ENCODE measurements at regions of chr3 and their contacts with region 1.

Region 1: GRCh38 chr3:48273594-48274211 is 32.8 kb downstream of the ZNF589 start:
- DNase-seq: peak; percentile 31
- ATAC-seq: peak; percentile 67
- H3K4me3 Mint-ChIP-seq: no peak overlapping the region
- H3K27ac Mint-ChIP-seq: no peak overlapping the region
- H3K4me1 Mint-ChIP-seq: no peaks in the 10 kb centered on the region
- H3K27me3 Mint-ChIP-seq: no peaks in the 10 kb centered on the region
- CTCF ChIP-seq: no peak

Region 2: DNA sequence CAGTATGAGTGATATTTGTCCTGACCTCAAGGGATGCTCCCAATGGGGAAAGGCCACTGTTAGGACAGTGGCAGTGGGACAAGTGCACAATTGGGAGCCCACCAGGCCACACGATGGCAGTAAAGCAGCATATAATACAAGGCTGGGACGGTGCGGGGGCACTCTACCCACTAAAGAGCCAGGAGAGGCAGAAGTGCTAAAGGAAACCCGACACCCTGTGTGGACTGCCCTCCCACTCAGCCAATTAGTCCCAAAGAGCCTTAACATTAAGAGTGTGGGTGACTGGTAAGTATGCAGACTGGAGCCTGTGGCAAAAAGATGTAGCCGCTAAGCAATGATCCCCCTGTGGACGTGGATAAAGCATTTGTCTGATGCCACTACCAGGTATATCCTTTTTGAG is 41.0 kb before region 1 on chr3:
- CTCF ChIA-PET with region 1: no interaction called
- POLR2A ChIA-PET with region 1: no interaction called
- intact Hi-C with region 1: loop called (anchors 1 kb)
- DNase-seq: peak; percentile 34
- ATAC-seq: peak; percentile 98
- H3K4me3 Mint-ChIP-seq: peak overlapping the region; percentile 32
- H3K27ac Mint-ChIP-seq: peak overlapping the region; percentile 19
- H3K4me1 Mint-ChIP-seq: peaks cover 27% of the 10 kb centered on the region
- H3K27me3 Mint-ChIP-seq: no peaks in the 10 kb centered on the region
- CTCF ChIP-seq: no peak

Region 3: DNA sequence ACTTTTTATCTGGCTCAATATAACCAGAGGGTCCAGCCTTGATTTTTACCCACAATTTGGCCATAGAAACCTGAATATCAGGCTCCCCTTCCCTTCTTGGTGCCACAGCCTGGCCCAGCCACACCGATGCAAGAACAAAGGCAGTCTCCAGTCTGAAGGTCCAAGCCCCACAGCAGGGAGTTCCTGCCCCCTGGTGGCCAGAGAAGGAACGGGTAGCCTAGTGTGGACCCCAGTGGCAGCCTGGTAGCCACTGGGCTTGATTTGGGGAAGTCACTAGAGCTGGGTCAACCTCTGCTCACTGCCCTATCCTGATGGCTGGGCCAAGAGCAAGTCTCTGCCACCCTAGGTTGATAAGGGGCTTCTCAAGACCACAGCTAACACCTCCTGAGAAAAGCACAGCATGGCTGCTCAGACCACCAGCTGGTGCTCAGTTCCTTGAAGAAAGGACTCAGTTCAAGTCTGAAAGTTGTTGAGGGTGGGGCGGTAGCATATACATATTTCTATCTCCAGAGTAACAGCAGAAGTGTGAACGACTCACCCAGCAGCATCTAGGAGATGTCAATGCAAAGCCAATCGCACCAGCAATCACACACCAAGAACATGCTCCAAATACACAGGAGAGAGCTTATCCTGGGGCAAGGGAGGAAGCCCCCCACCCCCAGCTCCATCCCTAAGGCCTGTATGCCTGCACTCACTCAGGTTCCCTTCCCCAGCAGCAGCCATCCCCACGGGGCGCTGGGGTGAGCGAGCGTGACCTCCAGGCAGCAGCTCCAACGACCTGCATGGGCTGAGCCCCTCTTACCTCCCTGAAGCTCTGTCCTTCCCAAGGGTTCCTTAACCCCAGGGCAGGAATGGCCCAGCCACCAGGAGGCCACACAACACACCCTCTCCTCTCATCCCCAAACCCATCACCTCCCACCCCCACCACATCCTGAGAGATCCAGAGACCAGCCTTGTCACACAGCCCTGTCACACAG is 275.3 kb after region 1 on chr3:
- CTCF ChIA-PET with region 1: interaction called, 5 read pairs
- POLR2A ChIA-PET with region 1: no interaction called
- intact Hi-C with region 1: loop called (anchors 1 kb)
- DNase-seq: peak; percentile 66
- ATAC-seq: peak; percentile 100
- H3K4me3 Mint-ChIP-seq: no peak overlapping the region
- H3K27ac Mint-ChIP-seq: no peak overlapping the region
- H3K4me1 Mint-ChIP-seq: no peaks in the 10 kb centered on the region
- H3K27me3 Mint-ChIP-seq: no peaks in the 10 kb centered on the region
- CTCF ChIP-seq: no peak

Region 4: DNA sequence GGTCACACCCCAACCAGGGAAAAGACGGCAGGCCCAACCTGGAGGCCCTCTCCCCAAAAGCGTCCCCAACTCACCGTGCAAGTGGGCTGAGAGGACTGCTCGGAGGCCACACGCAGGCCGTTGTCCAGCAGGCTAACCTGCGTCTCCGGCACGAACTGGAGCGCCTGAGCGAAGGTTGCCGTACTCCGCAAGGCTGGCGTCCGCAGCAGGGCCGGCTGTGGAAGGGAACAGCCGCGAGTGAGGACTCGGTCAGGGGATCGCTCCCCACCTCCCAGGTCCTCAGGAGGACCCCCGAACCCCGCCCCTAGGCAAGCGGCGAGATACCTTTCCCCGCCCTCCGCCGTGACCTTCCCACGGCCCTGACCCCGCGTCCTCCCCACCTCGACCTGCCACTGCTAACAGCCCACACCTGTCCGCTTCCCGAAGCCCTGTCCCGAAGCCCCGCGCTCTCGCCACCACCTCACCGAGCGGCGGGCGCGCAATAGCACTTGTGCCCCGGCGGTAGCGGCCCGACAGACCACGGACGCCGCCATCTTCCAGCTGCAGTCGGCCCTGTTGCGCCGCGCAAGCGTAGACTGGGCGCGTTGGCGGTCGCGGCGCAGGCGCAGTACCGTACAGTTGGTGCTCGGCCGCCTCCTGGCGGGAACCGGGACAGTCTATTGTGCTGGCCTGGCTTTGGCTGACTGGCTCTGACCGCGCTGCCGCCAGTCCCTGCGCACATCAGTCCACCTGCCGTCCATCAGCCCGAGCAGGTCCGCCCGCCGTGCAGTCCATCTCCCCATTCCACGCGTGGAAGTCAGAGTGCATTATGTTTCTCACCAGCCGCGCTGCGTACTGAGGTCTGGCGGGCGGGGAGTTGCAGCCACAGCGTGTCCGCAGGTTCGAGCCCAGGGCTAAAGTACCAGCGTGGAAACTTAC is 335.6 kb after region 1 on chr3 and contains the start of gene UQCRC1:
- CTCF ChIA-PET with region 1: no interaction called
- POLR2A ChIA-PET with region 1: no interaction called
- intact Hi-C with region 1: loop called (anchors 2 kb)
- DNase-seq: peak; percentile 89
- ATAC-seq: peak; percentile 99
- H3K4me3 Mint-ChIP-seq: peak within 1 kb of the TSS; percentile 98
- H3K27ac Mint-ChIP-seq: peak within 1 kb of the TSS; percentile 93
- H3K4me1 Mint-ChIP-seq: peaks cover 18% of the 10 kb centered on the region
- H3K27me3 Mint-ChIP-seq: no peaks in the 10 kb centered on the region
- CTCF ChIP-seq: no peak
- total RNA-seq, gene UQCRC1: 117 and 118 TPM in 2 replicates

Region 5: DNA sequence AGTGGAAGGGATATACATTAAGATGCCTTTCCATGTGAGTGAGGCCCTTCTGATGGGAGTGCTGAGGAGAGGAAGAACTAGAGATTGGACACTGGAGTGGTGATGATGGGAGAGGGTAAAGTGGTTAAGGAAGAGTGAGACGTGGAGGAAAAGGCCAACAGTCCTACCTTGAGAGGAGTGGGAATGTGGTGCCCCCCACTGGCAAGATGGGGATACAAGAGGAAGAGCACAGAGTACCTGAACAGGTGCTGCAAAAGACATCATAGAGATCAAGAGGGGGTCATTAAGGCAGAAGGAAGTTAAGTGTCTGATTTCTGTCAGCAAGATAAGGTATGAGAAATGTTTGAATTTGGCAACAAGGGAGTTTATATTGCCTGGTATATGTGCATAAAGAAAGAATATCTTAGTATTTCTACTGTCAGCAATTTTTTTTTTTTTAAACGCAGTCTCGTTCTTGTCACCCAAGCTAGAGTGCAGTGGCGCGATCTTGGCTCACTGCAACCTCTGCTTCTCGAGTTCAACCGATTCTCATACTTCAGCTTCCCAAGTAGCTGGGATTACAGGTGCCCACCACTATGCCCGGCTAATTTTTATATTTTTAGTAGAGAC is 678.9 kb after region 1 on chr3:
- CTCF ChIA-PET with region 1: no interaction called
- POLR2A ChIA-PET with region 1: no interaction called
- intact Hi-C with region 1: no loop called
- DNase-seq: no peak
- ATAC-seq: peak; percentile 31
- H3K4me3 Mint-ChIP-seq: no peak overlapping the region
- H3K27ac Mint-ChIP-seq: no peak overlapping the region
- H3K4me1 Mint-ChIP-seq: no peaks in the 10 kb centered on the region
- H3K27me3 Mint-ChIP-seq: no peaks in the 10 kb centered on the region
- CTCF ChIP-seq: no peak

Measured in activated B cell treated with CpG ODN at 0.5 μM for 24 hours (primary cell).